ENCODE measurements at regions of chr19 and their contacts with region 1.

Region 1: DNA sequence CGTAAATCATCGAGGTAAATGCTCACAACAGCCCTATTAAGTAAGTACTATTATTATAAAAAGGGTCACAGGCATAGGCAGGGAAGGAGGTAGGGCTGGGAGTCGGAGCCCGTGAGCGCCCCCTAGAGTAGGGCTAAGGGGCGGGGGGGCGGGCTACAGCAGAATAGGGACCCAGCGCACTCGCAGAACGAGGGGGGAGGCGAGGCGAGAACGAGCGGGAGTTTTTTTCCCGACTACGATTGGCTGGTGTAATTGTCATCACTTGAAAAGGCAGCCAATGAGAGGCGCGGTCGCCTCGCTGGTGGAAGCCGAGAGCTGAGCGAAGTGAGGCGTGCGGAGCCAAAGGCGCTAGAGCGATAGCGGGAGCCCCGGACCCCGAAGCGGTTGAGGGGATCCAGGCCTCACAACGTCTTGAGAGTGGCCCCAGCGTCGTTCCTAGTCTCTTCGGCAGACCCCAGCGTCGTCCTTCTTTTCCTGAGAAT is 24.2 kb downstream of the KEAP1 start:
- DNase-seq: peak; percentile 87 to 94 (median 90)
- H3K4me3 ChIP-seq: peak overlapping the region; percentile 40
- H3K27ac ChIP-seq: peak overlapping the region in 1 of 2 donors; percentile 41
- H3K4me1 ChIP-seq: no peaks in the 10 kb centered on the region
- H3K27me3 ChIP-seq: no peaks in the 10 kb centered on the region
- CTCF ChIP-seq: peak in 2 of 3 donors; percentile 33 to 74
- EP300 ChIP-seq: no peak
- POLR2A ChIP-seq: peak; percentile 27

Region 2: DNA sequence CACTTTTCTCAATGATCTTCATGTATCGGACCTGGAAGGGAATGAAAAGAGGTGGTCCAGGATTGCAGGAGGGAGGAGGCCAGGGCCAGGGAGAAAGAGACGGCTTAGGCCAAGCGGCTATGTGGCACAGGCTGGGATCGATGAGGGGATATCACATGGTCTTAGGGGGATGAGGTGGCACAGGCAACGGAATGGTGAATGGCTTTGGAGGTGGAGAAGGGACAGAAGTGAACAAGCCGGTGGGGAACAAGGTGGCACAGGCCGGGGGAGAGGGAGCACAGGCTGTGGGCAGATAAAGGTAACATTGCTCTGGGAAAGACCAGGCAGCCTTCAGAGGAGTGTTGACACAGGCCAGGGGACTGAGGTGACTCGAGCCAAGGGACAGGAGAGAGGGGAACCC is 95.5 kb after region 1 on chr19:
- intact Hi-C with region 1: loop called in 1 of 4 experiments (anchors 5 kb)
- DNase-seq: no peak
- H3K4me3 ChIP-seq: no peak overlapping the region
- H3K27ac ChIP-seq: no peak overlapping the region
- H3K4me1 ChIP-seq: peaks cover under 1% of the 10 kb centered on the region
- H3K27me3 ChIP-seq: no peaks in the 10 kb centered on the region
- CTCF ChIP-seq: no peak
- EP300 ChIP-seq: no peak
- POLR2A ChIP-seq: no peak

Region 3: GRCh38 chr19:10747271-10747670 is 268.3 kb after region 1 on chr19:
- intact Hi-C with region 1: no loop called
- DNase-seq: no peak
- H3K4me3 ChIP-seq: no peak overlapping the region
- H3K27ac ChIP-seq: no peak overlapping the region
- H3K4me1 ChIP-seq: peaks cover 21% of the 10 kb centered on the region
- H3K27me3 ChIP-seq: no peaks in the 10 kb centered on the region
- CTCF ChIP-seq: no peak
- EP300 ChIP-seq: no peak
- POLR2A ChIP-seq: no peak